Activated naive CD8-positive, alpha-beta T cell treated with anti-CD3 and anti-CD28 coated beads, Interleukin-2, amount 10 ng/mL, durations not matched to agents 7 days and 5 days (primary cell): ENCODE measurements at regions of chr19 and their contacts with region 1.

Region 1: DNA sequence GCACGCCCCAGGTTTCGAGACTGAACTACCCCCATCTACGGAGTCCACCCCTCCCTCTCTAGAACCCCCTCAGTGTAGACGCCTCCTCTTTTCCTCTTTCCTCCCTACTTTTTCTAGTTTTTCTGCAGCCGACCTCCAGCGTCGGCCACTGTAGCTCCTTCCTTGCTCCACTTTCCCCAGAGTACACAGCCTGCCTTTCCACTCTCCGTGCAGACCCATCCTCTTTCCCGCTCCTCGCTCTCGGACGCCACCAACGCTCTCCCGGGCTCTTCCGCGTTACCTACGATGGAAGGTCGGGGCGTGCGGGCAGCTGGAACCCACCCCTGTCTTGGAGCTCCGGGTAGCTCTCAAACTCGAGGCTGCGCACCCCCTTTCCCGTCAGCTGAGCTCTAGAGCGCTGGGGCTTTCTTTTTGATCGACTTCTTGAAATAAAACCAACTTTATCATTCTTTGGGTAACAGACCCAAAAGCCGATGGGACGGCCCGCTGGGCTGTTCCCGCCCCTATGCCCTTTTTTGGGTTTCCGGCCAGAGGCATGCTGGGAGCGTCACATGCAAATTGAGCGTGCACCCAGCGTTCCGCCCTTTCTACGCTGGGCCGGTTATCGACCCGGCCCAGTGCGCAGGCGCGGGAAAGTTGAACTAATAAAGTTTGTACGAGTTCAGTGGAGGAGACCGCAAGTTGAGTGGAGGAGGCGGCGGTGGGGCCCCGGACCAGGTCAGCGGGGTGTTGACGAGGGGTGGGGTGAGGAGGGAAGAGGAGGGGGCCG is at the starts of genes BCL2L12 and IRF3:
- DNase-seq: peak; percentile 98
- ATAC-seq: peak; percentile 84
- H3K4me3 Mint-ChIP-seq: peak within 1 kb of the TSS; percentile 94
- H3K27ac Mint-ChIP-seq: peak within 1 kb of the TSS; percentile 93
- H3K4me1 Mint-ChIP-seq: peaks cover 25% of the 10 kb centered on the region
- H3K27me3 Mint-ChIP-seq: no peaks in the 10 kb centered on the region
- total RNA-seq, gene BCL2L12: 63.4 to 71.3 TPM
- total RNA-seq, gene IRF3: 198 to 205 TPM

Region 2: GRCh38 chr19:49676690-49677231 is 11.2 kb after region 1 on chr19:
- POLR2A ChIA-PET with region 1: interaction called, 23 read pairs
- DNase-seq: peak; percentile 94
- ATAC-seq: peak; percentile 77
- H3K4me3 Mint-ChIP-seq: peak overlapping the region; percentile 99
- H3K27ac Mint-ChIP-seq: peak overlapping the region; percentile 97
- H3K4me1 Mint-ChIP-seq: peaks cover 25% of the 10 kb centered on the region
- H3K27me3 Mint-ChIP-seq: no peaks in the 10 kb centered on the region